Activated T-helper 1 cell treated with anti-CD3 and anti-CD28 coated beads, Interleukin-12 subunit alpha, Interleukin-12 subunit beta, Interleukin-2, Interleukin-4 antibody, amounts not matched to agents 30 ng/mL and 10 ng/mL and 1 ng/mL, durations not matched to agents 14 hours and 24 hours and 36 hours (primary cell): ENCODE measurements at regions of chr5 and their contacts with region 1.

Region 1: DNA sequence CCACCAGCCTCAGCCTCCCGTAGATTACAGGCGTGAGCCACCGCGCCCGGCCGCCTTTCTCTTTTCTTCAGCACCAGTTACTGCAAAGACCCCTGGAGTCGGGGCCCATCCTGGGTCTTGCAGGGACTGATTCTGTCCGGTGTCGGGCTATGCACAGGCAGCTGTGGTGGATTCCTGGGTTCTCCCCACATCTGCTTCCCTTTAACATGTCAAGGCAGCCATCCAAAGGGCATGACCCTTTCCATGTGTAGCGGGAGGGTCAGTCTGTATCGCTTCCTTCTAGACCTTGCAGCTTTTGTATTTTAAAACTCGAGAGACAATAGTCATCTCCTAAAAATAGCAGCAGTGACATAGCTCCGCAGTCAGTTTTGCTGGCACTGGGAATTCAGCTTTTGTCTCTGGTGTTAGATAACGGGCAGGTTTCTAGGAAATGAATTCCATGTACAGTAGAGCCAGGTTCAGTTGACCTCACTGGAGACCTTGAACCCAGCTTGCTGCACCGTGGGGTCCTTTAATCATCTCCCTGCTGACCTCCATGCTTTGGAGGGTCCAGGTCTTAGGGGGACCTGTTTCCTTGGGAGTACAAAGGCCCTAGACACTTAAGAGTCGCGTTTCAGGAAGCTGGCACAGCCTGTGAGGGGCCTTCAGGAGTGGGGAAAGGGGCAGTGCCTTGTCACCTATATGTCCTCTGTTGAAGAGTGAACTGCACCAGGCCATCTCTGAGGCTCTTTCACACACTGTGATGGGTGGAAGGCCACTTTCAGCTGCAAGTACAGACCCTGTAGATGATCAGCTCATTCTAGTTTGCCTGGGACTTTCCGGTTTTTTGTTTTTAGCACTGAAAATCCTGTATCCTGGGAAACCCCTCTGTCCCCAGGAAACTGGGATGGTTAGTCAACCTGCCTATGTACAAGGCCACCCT is 13.8 kb downstream of the ANKRD33B start:
- DNase-seq: no peak
- H3K4me3 Mint-ChIP-seq: no peak overlapping the region
- H3K27ac Mint-ChIP-seq: peak overlapping the region; percentile 79
- H3K4me1 Mint-ChIP-seq: peaks cover 65% of the 10 kb centered on the region
- H3K27me3 Mint-ChIP-seq: no peaks in the 10 kb centered on the region

Region 2: DNA sequence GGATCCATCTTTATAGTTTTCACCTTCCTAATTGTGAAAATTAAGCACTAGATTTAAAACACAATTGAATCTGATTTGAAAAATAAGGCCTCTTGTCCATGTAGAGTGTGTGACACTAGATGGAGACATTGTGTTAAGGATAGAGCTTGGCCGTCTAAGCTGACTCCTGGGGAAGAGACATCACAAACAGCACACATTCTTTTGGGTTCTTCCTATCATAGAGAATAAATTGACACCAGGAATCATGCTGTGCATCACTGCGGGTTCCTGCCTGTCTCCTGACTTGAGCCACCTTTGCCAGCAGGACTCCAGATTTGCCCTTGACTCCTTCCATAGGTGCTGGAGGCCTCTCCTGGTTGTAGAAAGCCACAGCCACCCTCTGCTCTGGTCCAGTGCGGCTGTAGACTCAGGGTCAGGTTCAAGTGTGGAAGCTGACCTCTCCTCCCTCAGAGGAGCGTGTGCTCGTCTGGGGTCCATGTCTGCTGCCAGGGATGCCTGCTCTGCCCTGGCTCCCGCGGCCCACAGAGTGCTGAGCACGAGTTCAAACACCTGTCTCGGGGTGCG is 124.8 kb before region 1 on chr5:
- intact Hi-C with region 1: loop called (anchors 5 kb)
- DNase-seq: peak; percentile 24
- H3K4me3 Mint-ChIP-seq: no peak overlapping the region
- H3K27ac Mint-ChIP-seq: no peak overlapping the region
- H3K4me1 Mint-ChIP-seq: no peaks in the 10 kb centered on the region
- H3K27me3 Mint-ChIP-seq: peaks cover 2% of the 10 kb centered on the region

Region 3: DNA sequence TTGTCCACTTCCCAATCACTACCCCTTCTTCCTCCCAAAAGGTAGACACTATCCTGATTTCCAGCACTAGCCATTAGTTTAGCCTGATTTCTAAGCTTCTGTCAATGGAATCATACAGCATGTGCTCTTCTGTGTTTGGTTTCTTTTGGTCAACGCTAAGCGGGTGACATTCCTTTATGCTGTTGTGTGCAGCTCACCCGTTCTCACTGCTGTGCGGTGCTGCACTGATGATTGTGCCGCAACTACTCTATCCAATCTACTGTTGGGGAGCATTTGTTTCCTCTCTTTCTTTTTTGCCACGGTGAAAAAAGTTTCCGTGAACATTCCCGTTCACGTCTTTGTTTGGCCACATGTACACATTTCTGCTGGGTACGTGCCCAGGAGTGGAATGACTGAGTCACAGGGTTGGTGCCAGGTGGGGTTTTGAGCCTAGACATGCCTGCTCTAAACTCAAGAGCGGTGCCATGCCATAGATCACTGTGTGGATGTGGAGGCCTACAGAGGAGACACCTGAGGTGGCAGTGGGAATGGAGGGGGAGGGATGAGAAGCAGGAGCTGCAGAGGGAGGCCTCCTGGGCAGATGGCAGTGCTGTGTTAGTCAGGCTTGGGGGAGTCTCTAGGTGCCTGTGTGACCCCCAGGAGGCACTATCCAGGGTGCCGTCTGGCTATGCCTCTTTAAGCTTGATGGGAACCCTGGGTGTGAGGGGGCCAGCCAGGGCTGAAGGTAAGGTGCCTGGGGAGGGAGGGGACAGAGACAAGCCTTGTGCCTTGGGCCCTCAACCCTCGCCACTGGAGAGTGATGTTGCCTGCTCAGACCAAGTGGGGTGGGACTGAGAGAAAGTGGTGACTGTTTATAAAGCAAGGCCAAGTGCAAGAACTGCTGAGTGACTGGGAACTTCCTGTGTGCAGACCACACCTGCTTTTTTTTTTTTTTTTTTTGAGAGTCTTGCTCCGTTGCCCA is 25.2 kb before region 1 on chr5:
- intact Hi-C with region 1: no loop called
- DNase-seq: no peak
- H3K4me3 Mint-ChIP-seq: no peak overlapping the region
- H3K27ac Mint-ChIP-seq: no peak overlapping the region
- H3K4me1 Mint-ChIP-seq: peaks cover 19% of the 10 kb centered on the region
- H3K27me3 Mint-ChIP-seq: peaks cover 20% of the 10 kb centered on the region

Region 4: GRCh38 chr5:10595678-10596309 is 18.2 kb after region 1 on chr5:
- intact Hi-C with region 1: loop called (anchors 1 kb)
- DNase-seq: peak; percentile 54
- H3K4me3 Mint-ChIP-seq: peak overlapping the region; percentile 9
- H3K27ac Mint-ChIP-seq: peak overlapping the region; percentile 44
- H3K4me1 Mint-ChIP-seq: peaks cover 77% of the 10 kb centered on the region
- H3K27me3 Mint-ChIP-seq: peaks cover 4% of the 10 kb centered on the region

Region 5: GRCh38 chr5:10627160-10627701 is 49.6 kb after region 1 on chr5:
- intact Hi-C with region 1: loop called (anchors 1 kb)
- DNase-seq: no peak
- H3K4me3 Mint-ChIP-seq: peak overlapping the region; percentile 77
- H3K27ac Mint-ChIP-seq: peak overlapping the region; percentile 90
- H3K4me1 Mint-ChIP-seq: peaks cover 50% of the 10 kb centered on the region
- H3K27me3 Mint-ChIP-seq: peaks cover 3% of the 10 kb centered on the region